Activated CD8-positive, alpha-beta T cell treated with anti-CD3 and anti-CD28 coated beads, Interleukin-2, amount 10 ng/mL, durations not matched to agents 7 days and 5 days (primary cell): ENCODE measurements at regions of chr1 and their contacts with region 1.

Region 1: DNA sequence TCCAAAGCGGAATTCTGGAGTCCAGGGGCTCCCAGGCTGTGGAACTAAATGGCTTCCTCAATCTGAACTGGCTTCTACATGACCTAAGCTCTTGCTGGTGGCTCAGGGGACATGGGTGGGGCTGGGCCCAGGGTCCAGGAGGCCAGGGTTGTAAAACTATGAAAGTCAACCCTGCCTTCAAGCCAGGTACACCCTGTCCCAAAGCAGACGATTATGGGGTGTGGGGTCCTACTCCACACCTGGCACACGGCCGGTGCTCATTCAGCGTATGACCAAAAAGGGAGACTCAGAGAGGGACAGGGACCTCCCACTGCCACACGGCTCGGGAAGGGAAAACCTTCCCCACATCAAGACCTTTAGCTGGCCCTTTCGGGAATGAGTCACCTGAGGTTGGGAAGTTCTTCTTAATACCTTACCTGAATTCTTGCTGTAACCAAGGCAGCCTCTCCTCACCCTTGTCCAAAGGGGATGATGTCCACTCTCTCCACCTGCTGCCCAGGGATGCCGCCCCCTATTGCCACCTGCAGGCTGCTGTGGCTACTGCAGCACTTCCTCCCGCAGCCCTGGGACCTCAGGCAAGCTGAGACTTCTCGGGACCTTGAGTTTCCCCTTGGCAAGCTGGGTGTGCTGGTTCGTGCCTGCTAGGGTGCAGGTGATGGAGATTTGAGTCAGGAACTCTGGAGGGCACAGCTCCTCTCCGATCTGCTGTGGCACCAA is 32.2 kb downstream of the RUNX3 start:
- DNase-seq: peak; percentile 70
- ATAC-seq: peak; percentile 45
- H3K4me3 Mint-ChIP-seq: peak overlapping the region; percentile 43
- H3K27ac Mint-ChIP-seq: peak overlapping the region; percentile 75
- H3K4me1 Mint-ChIP-seq: peaks cover 22% of the 10 kb centered on the region
- H3K27me3 Mint-ChIP-seq: no peaks in the 10 kb centered on the region

Region 2: GRCh38 chr1:24878775-24879742 is 18.9 kb before region 1 on chr1:
- CTCF ChIA-PET with region 1: interaction called, 11 read pairs
- POLR2A ChIA-PET with region 1: no interaction called
- DNase-seq: no peak
- ATAC-seq: no peak
- H3K4me3 Mint-ChIP-seq: no peak overlapping the region
- H3K27ac Mint-ChIP-seq: no peak overlapping the region
- H3K4me1 Mint-ChIP-seq: no peaks in the 10 kb centered on the region
- H3K27me3 Mint-ChIP-seq: peaks cover 49% of the 10 kb centered on the region